ENCODE measurements at regions of chr1 and their contacts with region 1.

Region 1: DNA sequence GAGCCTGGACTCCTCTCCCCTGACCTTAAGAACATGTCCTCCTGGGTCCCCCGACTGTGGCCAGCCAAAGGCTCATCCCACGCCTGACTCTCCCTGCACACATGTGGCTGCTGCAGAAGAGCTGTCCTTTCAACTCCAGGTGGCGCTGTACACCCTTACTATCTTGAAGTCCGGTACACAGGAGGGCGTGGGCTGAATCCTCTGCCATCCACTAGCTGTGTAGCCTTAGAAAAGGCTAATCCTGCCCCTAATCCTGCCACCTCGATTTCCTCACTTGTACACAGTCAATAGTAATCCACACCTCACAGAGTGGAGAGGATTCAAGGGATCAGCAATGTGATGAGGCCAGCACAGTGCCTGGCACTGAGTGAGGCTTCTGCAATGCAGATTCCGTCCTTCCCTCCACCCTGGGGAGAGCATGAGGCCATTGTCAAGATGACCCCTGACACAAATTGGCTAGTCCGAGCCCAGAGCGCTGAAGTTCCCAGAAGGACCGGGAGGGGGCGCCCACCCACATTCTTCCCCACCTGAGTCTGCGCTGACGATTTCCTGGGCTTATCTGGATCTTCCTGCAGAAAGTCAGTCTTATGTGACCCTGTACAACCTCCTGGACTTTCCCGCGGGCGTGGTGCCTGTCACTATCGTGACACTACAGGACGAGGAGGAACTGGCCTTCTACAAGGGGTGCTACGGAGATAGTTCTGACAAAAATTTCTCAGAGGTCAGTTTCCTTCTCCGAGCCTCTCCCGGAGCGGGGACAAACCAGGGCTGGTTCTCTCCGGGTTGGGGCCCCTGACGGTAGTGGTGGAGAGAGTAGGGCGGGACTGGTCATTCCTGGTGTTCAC is 47.1 kb upstream of the DMBX1 start:
- DNase-seq: peak; percentile 83 to 100
- H3K4me3 ChIP-seq: peak overlapping the region; percentile 38 to 68 (median 58); a peak in 7 of 8 replicates
- H3K27ac ChIP-seq: peak overlapping the region; percentile 51; the same call in 1 of the 2 replicates
- H3K4me1 ChIP-seq: peaks cover 1 to 17% (median 6%) of the 10 kb centered on the region in 4 experiments; a peak in 6 of 7 replicates
- H3K27me3 ChIP-seq: peaks cover 7 to 14% (median 13%) of the 10 kb centered on the region in 4 experiments
- CTCF ChIP-seq: peak; percentile 81 to 95 (median 89)
- EP300 ChIP-seq: no peak
- POLR2A ChIP-seq: no peak
- RAD21 ChIP-seq: peak; percentile 71 to 80

Region 2: GRCh38 chr1:46401964-46402626 is 40.4 kb before region 1 on chr1:
- CTCF ChIA-PET with region 1: interaction called, 513 read pairs
- POLR2A ChIA-PET with region 1: interaction called, 3 read pairs
- DNase-seq: peak in 1 of 2 experiments; percentile 85
- H3K4me3 ChIP-seq: no peak overlapping the region
- H3K27ac ChIP-seq: no peak overlapping the region
- H3K4me1 ChIP-seq: peaks cover 9 to 22% (median 17%) of the 10 kb centered on the region in 4 experiments
- H3K27me3 ChIP-seq: no peaks in the 10 kb centered on the region
- CTCF ChIP-seq: no peak
- EP300 ChIP-seq: no peak
- POLR2A ChIP-seq: no peak
- RAD21 ChIP-seq: no peak

Region 3: GRCh38 chr1:46431691-46432090 is 10.8 kb before region 1 on chr1:
- CTCF ChIA-PET with region 1: interaction called, 67 read pairs
- POLR2A ChIA-PET with region 1: interaction called, 13 read pairs
- DNase-seq: no peak
- H3K4me3 ChIP-seq: no peak overlapping the region
- H3K27ac ChIP-seq: no peak overlapping the region
- H3K4me1 ChIP-seq: peaks cover 0 to 7% (median 2%) of the 10 kb centered on the region in 4 experiments; a peak in 3 of 7 replicates
- H3K27me3 ChIP-seq: no peaks in the 10 kb centered on the region; a peak in 2 of 7 replicates
- CTCF ChIP-seq: peak in 2 of 3 experiments; percentile 21 to 36; a peak in 2 of 4 replicates
- EP300 ChIP-seq: no peak
- POLR2A ChIP-seq: no peak
- RAD21 ChIP-seq: no peak

Region 4: DNA sequence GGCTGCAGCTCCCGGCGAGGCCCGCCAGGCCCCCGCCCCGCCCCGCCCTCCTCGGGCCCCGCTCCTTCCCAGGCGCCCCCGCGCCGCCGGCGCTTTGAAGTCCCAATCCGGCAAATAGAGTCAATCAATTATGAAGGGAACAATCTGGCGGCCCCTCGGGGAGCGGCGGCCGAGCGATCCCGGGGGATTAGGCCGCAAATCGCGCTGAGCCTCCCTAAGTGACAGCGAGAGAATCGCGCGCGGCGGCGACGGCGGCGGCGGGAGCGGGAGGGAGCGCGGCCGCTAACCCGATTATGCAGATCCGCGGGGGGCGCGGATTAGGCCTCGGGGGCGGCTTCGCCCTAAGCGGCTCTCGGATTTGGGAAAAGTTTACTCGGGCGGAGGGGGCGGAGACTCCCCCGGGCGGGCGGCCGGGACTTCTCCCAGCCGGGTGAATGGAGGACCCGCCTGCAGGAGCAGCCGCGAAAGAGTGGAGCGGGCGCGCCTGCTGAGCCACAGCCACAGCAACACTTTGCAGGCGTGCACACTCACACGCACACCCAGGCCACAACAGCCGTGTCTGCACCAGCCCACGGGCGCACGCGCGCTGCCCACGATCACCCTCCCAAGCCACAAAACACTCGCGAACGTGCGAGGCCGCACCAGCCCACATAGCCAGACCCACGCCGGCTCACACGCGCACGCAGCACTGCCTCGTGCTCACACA is 24.1 kb after region 1 on chr1:
- CTCF ChIA-PET with region 1: interaction called, 11 read pairs
- POLR2A ChIA-PET with region 1: interaction called, 8 read pairs
- DNase-seq: peak in 1 of 2 experiments; percentile 82
- H3K4me3 ChIP-seq: peak overlapping the region; percentile 40 to 69 (median 52)
- H3K27ac ChIP-seq: no peak overlapping the region
- H3K4me1 ChIP-seq: peaks cover 0 to 28% (median 21%) of the 10 kb centered on the region in 4 experiments; a peak in 6 of 7 replicates
- H3K27me3 ChIP-seq: peaks cover 17 to 75% (median 53%) of the 10 kb centered on the region in 4 experiments
- CTCF ChIP-seq: no peak
- EP300 ChIP-seq: no peak
- POLR2A ChIP-seq: no peak
- RAD21 ChIP-seq: no peak

Region 5: GRCh38 chr1:46489638-46490405 is 47.3 kb after region 1 on chr1 and contains the start of gene DMBX1:
- CTCF ChIA-PET with region 1: interaction called, 147 read pairs
- POLR2A ChIA-PET with region 1: interaction called, 4 read pairs
- DNase-seq: peak in 1 of 2 experiments; percentile 87
- H3K4me3 ChIP-seq: peak within 1 kb of the TSS; percentile 33 to 64 (median 44)
- H3K27ac ChIP-seq: no peak within 1 kb of the TSS
- H3K4me1 ChIP-seq: peaks cover 14 to 48% (median 42%) of the 10 kb centered on the region in 4 experiments
- H3K27me3 ChIP-seq: peaks cover 91 to 100% (median 99%) of the 10 kb centered on the region in 4 experiments
- CTCF ChIP-seq: no peak
- EP300 ChIP-seq: no peak
- POLR2A ChIP-seq: no peak
- RAD21 ChIP-seq: no peak
- total RNA-seq, gene DMBX1: 0.30 TPM in 1 of 2 replicates, not detected in the other

Region 6: GRCh38 chr1:46539972-46540371 is 97.4 kb after region 1 on chr1:
- CTCF ChIA-PET with region 1: interaction called, 160 read pairs
- POLR2A ChIA-PET with region 1: interaction called, 3 read pairs
- DNase-seq: no peak
- H3K4me3 ChIP-seq: no peak overlapping the region
- H3K27ac ChIP-seq: no peak overlapping the region
- H3K4me1 ChIP-seq: peaks cover 0 to 15% (median 8%) of the 10 kb centered on the region in 4 experiments; a peak in 6 of 7 replicates
- H3K27me3 ChIP-seq: peaks cover 21 to 63% (median 52%) of the 10 kb centered on the region in 4 experiments
- CTCF ChIP-seq: no peak
- EP300 ChIP-seq: no peak
- POLR2A ChIP-seq: no peak
- RAD21 ChIP-seq: no peak

Measured in H1 (cell line).